RWPE1 (cell line): ENCODE measurements at regions of chr19 and their contacts with region 1.

Region 1: GRCh38 chr19:5803752-5804515 is 933 bp upstream of the NRTN start:
- DNase-seq: peak; percentile 90
- H3K27ac ChIP-seq: peak overlapping the region; percentile 39; the same call in 1 of the 2 replicates
- CTCF ChIP-seq: peak; percentile 96

Region 2: DNA sequence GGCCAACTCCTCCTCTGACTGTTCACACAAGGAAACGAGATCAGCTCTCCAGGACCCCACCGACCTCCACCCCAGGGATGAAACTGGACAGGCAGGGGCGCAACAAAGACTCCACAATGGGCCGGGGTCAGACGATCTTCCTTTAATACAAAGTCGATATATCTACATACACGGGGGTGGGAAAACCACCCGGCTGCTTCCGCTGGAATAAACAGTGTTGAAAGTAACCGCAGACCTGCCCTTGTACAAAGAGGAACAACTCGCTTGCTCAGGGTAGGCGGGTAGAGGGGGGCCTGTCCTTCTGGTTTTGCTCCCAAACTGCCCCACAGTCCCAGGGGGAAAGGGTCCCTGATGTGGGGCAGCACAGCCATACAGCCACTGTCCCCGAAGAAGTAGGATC is 598.6 kb before region 1 on chr19:
- CTCF ChIA-PET with region 1: no interaction called
- POLR2A ChIA-PET with region 1: no interaction called
- DNase-seq: no peak
- H3K27ac ChIP-seq: no peak overlapping the region
- CTCF ChIP-seq: no peak

Region 3: GRCh38 chr19:5790573-5791520 is 13.1 kb before region 1 on chr19 and contains the start of gene DUS3L:
- CTCF ChIA-PET with region 1: interaction called, 14 read pairs
- POLR2A ChIA-PET with region 1: no interaction called
- DNase-seq: peak; percentile 97
- H3K27ac ChIP-seq: peak within 1 kb of the TSS; percentile 97
- CTCF ChIP-seq: no peak

Region 4: GRCh38 chr19:5827891-5828660 is 24.1 kb after region 1 on chr19:
- CTCF ChIA-PET with region 1: interaction called, 20 read pairs
- POLR2A ChIA-PET with region 1: interaction called, 7 read pairs
- DNase-seq: peak; percentile 98
- H3K27ac ChIP-seq: peak overlapping the region; percentile 89
- CTCF ChIP-seq: no peak

Region 5: DNA sequence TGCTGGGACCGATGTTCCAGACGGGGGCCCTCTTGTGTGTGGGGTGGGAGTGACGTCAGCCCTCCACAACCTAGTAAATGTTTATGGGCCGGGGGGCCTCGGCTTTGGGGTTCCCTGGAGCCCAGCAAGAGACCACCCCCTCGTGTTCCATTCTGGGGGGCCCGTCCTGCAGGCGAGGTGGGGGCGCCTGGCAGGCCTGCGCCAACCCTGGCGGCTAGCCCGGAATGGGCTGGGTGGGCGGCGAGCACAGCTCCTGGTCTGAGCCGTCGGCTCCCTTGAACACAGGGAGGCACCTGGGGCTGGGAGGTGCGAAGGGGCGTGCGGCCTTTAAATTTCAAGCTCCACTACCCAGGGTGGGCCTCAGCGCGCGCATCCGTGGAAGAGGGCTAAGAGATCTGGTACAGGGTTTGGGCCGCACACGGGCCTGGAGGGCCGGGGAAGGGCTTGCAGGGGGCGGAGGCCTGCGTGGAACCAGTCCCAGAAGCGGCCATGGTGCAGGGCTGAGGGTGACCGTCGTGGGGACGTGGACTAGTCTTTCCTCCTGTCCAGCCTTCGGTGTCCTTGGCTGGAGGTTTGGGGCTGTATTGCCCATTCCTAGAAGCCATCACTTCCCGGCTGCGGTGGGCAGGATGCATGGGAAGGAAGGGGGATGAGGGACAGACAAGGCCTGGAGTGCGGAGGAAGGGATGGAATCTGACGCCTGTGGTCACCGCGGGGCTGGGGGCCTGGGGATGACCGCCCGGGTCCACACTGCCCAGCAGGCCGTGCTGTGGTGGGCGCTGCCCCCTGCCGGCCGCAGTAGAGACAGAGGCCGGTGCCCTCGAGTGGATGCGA is 88.2 kb after region 1 on chr19:
- CTCF ChIA-PET with region 1: interaction called, 15 read pairs
- POLR2A ChIA-PET with region 1: no interaction called
- DNase-seq: no peak
- H3K27ac ChIP-seq: peak overlapping the region; percentile 84; the same call in 1 of the 2 replicates
- CTCF ChIP-seq: 0 out of 2 replicates have a peak, but pooled peaks have one; percentile 20

Region 6: GRCh38 chr19:5904352-5905113 is 100.6 kb after region 1 on chr19 and contains the start of gene VMAC:
- CTCF ChIA-PET with region 1: interaction called, 10 read pairs
- POLR2A ChIA-PET with region 1: interaction called, 3 read pairs
- DNase-seq: peak; percentile 99
- H3K27ac ChIP-seq: peak within 1 kb of the TSS; percentile 96
- CTCF ChIP-seq: no peak